Activated naive CD4-positive, alpha-beta T cell treated with anti-CD3 and anti-CD28 coated beads for 36 hours (primary cell): ENCODE measurements at regions of chr2 and their contacts with region 1.

Region 1: DNA sequence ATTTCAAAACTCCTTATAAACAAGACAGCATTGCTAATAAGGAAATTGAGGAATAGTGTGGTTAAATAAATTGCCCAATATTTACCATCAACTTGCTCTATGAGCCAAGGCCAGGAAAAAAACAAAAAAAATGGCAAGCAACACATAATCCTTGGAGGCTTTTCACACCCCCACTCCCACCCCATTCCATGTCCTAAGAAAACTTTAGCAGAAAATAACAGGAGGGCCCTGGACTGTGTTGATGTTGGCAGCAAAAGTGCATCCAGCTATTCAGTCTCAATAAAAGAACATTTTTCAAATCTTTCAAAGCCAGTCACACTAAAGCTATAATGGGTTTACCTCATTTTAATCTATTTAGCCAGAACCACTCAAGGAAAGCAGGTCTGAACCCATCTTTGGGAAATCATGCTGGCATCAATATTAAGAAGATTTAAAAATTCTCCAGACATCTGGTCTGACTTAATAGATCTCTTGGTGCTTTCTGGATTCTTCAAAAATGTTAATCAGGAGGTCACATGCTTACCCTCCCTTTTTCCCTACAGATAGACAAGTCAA is 34.6 kb upstream of the STK17B start:
- DNase-seq: no peak
- H3K4me3 Mint-ChIP-seq: no peak overlapping the region
- H3K27ac Mint-ChIP-seq: no peak overlapping the region
- H3K4me1 Mint-ChIP-seq: peaks cover 37% of the 10 kb centered on the region
- H3K27me3 Mint-ChIP-seq: no peaks in the 10 kb centered on the region

Region 2: DNA sequence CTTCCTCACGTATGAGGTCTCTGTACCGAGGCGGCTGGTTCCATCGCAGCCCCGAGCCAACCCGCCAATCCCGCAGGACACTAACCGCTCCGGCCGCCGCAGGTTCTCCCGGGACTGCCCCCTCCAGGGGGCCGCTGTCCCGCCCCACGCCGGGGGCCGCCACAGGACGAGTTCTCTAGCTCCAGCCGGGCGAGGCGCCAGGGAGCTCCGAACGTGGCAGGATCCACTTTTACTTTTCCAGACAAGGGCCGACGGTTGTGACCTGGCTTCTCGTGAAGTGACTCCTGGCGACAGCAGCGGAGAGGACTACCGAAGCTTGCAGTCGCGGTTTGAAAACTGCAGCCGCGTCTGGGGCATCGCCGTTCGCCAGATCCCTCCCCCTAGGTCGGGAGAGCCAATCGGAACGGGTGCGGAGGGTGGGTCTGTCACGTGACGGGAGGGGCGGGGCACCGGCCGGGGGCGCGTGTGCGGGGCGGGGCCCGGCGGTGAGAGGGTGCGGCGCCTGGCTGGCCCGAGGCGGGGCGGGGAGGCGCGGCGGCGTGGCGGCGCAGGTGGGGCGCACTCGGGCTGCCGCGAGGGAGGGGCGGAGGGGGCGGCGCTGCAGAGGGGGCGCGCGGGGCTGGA is 34.6 kb before region 1 on chr2 and contains the start of gene STK17B:
- CTCF ChIA-PET with region 1: no interaction called
- intact Hi-C with region 1: loop called (anchors 1 kb)
- DNase-seq: peak; percentile 98
- H3K4me3 Mint-ChIP-seq: peak within 1 kb of the TSS; percentile 93
- H3K27ac Mint-ChIP-seq: peak within 1 kb of the TSS; percentile 92
- H3K4me1 Mint-ChIP-seq: peaks cover 34% of the 10 kb centered on the region
- H3K27me3 Mint-ChIP-seq: no peaks in the 10 kb centered on the region
- total RNA-seq, gene STK17B: 141 to 143 TPM

Region 3: GRCh38 chr2:196182439-196183171 is 23.4 kb before region 1 on chr2:
- CTCF ChIA-PET with region 1: interaction called, 6 read pairs
- intact Hi-C with region 1: loop called (anchors 1 kb)
- DNase-seq: no peak
- H3K4me3 Mint-ChIP-seq: peak overlapping the region; percentile 46
- H3K27ac Mint-ChIP-seq: peak overlapping the region; percentile 94
- H3K4me1 Mint-ChIP-seq: peaks cover 76% of the 10 kb centered on the region
- H3K27me3 Mint-ChIP-seq: no peaks in the 10 kb centered on the region

Region 4: DNA sequence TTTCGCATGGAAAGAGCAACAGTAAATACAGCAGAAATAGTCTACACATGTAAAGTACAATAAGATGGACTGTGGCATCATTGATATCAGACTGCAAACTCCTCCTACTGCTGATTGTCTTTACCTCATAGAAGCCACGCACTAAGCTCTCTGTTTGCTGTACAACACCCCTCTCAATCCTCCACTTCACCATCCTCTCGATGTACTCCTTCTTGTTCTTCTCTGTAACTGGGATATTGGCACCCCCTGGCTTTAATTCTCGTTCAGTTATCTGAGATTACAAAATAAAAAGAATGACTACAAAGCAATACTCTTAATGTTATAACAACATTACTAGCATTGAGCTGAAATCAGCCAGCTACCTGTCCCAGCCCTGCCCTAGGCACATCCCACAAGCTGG is 14.7 kb after region 1 on chr2:
- CTCF ChIA-PET with region 1: interaction called, 7 read pairs
- intact Hi-C with region 1: loop called (anchors 1 kb)
- DNase-seq: peak; percentile 55
- H3K4me3 Mint-ChIP-seq: peak overlapping the region; percentile 13
- H3K27ac Mint-ChIP-seq: peak overlapping the region; percentile 0
- H3K4me1 Mint-ChIP-seq: peaks cover 81% of the 10 kb centered on the region
- H3K27me3 Mint-ChIP-seq: no peaks in the 10 kb centered on the region

Region 5: DNA sequence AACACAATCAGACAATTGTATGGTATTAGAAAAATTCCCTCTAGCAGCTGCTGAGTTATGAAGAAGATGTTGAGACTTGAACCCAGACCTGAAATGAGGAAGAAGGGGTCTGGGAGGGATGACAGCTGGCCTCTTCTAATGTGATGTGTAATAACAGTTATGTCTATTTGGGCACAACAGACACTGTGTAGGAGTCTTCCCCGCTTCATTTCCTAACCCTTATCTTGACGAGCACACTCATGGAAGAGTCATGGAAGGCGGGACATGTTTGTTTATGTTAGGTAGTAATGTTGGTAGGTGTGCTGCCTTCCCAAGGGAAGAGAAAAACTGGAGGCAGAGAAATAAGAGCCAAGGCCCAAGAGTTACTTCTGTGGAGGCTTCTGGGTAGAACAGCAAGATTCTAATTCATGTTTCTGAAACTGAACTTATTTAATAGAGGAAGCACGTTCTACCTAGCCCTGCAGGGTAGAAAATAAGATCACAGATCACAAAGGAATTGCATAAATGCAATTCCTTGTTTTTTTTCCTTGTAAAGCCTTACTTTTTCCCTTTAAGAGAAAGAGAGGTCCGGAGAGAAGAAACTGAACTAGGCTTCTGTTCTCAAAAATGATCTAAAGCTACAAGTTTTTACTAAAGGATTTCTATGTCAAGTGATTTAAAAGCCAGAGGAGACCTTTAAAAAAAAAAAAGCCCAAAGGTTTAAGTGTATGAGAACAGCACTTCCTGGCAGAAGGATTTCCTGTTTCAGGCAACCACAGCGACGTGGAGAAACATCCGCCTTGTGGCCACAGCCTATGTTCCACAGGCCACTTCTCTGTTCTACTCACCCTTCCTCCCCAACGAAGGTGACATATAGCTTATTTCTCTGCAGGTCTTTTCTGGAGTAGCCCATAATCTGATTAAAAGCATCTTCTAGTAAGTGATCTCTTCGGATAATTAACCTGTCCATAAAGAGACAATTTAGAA is 33.9 kb after region 1 on chr2:
- CTCF ChIA-PET with region 1: interaction called, 3 read pairs
- intact Hi-C with region 1: loop called (anchors 1 kb)
- DNase-seq: peak; percentile 93
- H3K4me3 Mint-ChIP-seq: peak overlapping the region; percentile 49
- H3K27ac Mint-ChIP-seq: peak overlapping the region; percentile 88
- H3K4me1 Mint-ChIP-seq: peaks cover 85% of the 10 kb centered on the region
- H3K27me3 Mint-ChIP-seq: no peaks in the 10 kb centered on the region

Region 6: GRCh38 chr2:196263181-196263747 is 57.3 kb after region 1 on chr2:
- CTCF ChIA-PET with region 1: no interaction called
- intact Hi-C with region 1: loop called (anchors 1 kb)
- DNase-seq: peak; percentile 61
- H3K4me3 Mint-ChIP-seq: peak overlapping the region; percentile 70
- H3K27ac Mint-ChIP-seq: peak overlapping the region; percentile 97
- H3K4me1 Mint-ChIP-seq: peaks cover 80% of the 10 kb centered on the region
- H3K27me3 Mint-ChIP-seq: no peaks in the 10 kb centered on the region

Region 7: GRCh38 chr2:196376984-196377877 is 171.3 kb after region 1 on chr2:
- CTCF ChIA-PET with region 1: no interaction called
- intact Hi-C with region 1: loop called (anchors 1 kb)
- DNase-seq: peak; percentile 62
- H3K4me3 Mint-ChIP-seq: no peak overlapping the region
- H3K27ac Mint-ChIP-seq: peak overlapping the region; percentile 50
- H3K4me1 Mint-ChIP-seq: peaks cover 12% of the 10 kb centered on the region
- H3K27me3 Mint-ChIP-seq: no peaks in the 10 kb centered on the region